ENCODE measurements at regions of chr9 and their contacts with region 1.

Region 1: GRCh38 chr9:131012396-131012917 is 3.5 kb downstream of the LAMC3 start:
- DNase-seq: no peak
- H3K4me3 ChIP-seq: no peak overlapping the region
- H3K27ac ChIP-seq: peak overlapping the region; percentile 21 to 82
- H3K4me1 ChIP-seq: no peaks in the 10 kb centered on the region
- H3K27me3 ChIP-seq: peaks cover 0 to 24% of the 10 kb centered on the region in 2 donors
- CTCF ChIP-seq: no peak
- POLR2A ChIP-seq: no peak

Region 2: GRCh38 chr9:130927995-130928900 is 84.2 kb before region 1 on chr9:
- intact Hi-C with region 1: loop called (anchors 5 kb)
- DNase-seq: no peak
- H3K4me3 ChIP-seq: no peak overlapping the region
- H3K27ac ChIP-seq: peak overlapping the region; percentile 27 to 80
- H3K4me1 ChIP-seq: peaks cover 0 to 5% of the 10 kb centered on the region in 2 donors
- H3K27me3 ChIP-seq: peaks cover 0 to 10% of the 10 kb centered on the region in 2 donors
- CTCF ChIP-seq: no peak
- POLR2A ChIP-seq: no peak

Region 3: DNA sequence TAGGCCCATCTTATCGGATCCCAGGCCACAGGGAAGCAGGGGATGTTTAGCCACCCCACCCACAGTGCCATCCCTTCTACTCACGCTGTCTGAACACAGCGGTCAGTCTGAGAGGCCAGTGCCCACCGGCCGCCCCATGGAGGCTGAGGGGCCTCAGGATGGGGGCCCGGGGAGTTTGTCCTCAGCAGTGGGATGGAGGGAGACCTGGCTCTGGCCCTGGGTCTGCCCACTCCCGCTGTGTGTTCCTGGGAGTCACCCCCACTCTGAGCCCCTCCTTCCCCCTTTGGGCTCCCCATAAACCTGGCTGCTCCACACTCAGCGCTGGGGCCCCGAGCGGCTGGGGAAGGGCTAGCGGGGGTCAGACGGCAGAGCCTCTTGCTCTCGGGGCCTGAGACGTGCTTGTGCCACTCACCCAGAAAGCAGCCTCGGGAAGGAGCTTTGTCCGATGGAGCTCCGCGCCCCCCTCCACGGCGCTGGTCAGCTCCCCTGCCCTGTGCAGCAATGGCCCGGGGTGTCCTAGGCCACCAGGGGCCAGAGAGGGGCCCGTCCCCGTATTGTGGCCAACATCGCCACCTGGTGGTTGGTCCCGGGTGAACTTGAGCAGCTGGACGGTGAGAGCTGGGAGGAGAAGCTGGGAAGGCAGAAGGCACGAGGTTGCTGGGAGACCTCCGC is 14.4 kb before region 1 on chr9:
- intact Hi-C with region 1: loop called (anchors 1 kb)
- DNase-seq: no peak
- H3K4me3 ChIP-seq: no peak overlapping the region
- H3K27ac ChIP-seq: no peak overlapping the region
- H3K4me1 ChIP-seq: no peaks in the 10 kb centered on the region
- H3K27me3 ChIP-seq: peaks cover 0 to 21% of the 10 kb centered on the region in 2 donors
- CTCF ChIP-seq: peak in 2 of 3 donors; percentile 35 to 45
- POLR2A ChIP-seq: no peak

Measured in breast epithelium (tissue), 4 donors.